CD4-positive, alpha-beta T cell (primary cell): ENCODE measurements at regions of chrX and their contacts with region 1.

Region 1: GRCh38 chrX:155216179-155216939 is at the start of gene VBP1:
- DNase-seq: peak; percentile 73 to 94 (median 81)
- ATAC-seq: peak; percentile 97
- H3K4me3 ChIP-seq: peak within 1 kb of the TSS; percentile 92
- H3K4me3 Mint-ChIP-seq: peak within 1 kb of the TSS; percentile 99
- H3K27ac ChIP-seq: peak within 1 kb of the TSS; percentile 70 to 75
- H3K27ac Mint-ChIP-seq: peak within 1 kb of the TSS; percentile 96
- H3K4me1 ChIP-seq: peaks cover 17% of the 10 kb centered on the region
- H3K4me1 Mint-ChIP-seq: peaks cover 35% of the 10 kb centered on the region
- H3K27me3 ChIP-seq: no peaks in the 10 kb centered on the region
- H3K27me3 Mint-ChIP-seq: no peaks in the 10 kb centered on the region
- CTCF ChIP-seq: peak; percentile 49
- total RNA-seq, gene VBP1: 8.5 to 8.7 TPM

Region 2: DNA sequence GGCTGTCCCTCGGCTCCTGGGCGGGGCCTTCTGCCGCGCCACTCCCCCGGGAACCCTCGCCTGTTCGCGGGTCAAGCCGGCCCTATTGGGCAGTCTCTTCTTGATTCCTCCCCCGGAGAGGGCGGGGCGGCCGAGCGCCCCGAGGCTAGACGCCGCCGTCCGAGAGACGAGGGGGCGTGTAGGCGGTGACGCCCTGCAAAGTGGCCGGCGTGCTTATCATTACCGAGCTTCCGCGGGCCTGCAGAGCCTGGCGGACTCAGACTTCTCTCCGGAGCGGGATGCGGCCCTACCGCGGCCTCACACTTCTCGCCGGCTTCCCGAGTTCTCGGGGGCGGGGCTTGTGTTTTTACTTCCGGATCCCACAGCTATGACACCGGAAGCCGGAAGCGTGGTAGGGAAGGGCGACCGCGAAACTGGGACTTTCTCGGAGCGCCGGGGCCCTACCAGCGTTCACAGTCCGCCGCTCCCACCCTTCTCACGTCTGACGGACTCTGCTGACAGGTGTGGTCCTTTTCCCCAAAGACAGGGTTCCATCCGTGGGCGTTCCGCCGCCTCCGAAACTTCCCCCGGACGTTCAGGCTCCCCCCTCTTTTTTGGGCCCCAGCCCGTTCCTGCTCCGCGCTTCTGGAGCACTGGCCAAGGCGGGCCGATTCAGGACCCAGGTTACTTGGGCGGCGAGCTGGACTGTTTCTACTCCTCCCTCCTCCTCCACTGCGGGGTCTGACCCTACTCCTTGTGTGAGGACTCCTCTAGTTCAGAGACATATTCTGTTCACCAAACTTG is 668.9 kb before region 1 on chrX and contains the start of gene IKBKG:
- CTCF ChIA-PET with region 1: no interaction called
- POLR2A ChIA-PET with region 1: no interaction called
- intact Hi-C with region 1: no loop called
- DNase-seq: peak; percentile 76 to 93 (median 84)
- ATAC-seq: peak; percentile 76
- H3K4me3 ChIP-seq: peak within 1 kb of the TSS; percentile 88
- H3K4me3 Mint-ChIP-seq: peak within 1 kb of the TSS; percentile 91
- H3K27ac ChIP-seq: peak within 1 kb of the TSS; percentile 81 to 92
- H3K27ac Mint-ChIP-seq: peak within 1 kb of the TSS; percentile 86
- H3K4me1 ChIP-seq: peaks cover 69% of the 10 kb centered on the region
- H3K4me1 Mint-ChIP-seq: peaks cover 44% of the 10 kb centered on the region
- H3K27me3 ChIP-seq: no peaks in the 10 kb centered on the region
- H3K27me3 Mint-ChIP-seq: no peaks in the 10 kb centered on the region
- CTCF ChIP-seq: no peak
- total RNA-seq, gene IKBKG: 26.2 to 27.2 TPM

Region 3: DNA sequence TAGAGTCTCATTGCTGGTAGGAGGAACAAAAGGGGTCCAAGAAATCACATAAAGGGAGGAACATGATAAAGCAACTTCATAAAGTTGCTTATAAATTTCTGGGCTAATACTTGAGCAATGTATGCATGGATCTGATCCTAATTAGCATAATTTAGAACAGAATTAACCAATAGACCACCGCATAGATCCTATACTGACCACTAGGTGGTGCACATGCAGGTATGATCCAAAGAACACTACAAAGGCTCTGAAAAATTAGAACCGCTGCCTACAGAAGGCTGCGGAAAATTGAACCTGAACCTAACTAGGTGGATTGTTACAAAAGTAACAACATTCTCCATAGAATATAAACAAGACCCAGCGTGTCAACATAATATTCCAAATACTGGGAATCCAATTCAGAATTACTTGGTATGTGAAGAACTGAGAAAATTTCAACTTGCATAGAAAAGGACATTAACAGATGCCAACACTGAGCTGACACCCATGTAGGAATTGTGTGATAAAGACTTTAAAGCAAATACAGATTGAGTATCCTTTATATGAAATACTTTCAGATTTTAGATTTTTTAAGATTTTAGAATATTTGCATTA is 121.8 kb before region 1 on chrX:
- CTCF ChIA-PET with region 1: no interaction called
- POLR2A ChIA-PET with region 1: no interaction called
- intact Hi-C with region 1: loop called (anchors 1 to 5 kb)
- DNase-seq: peak in 8 of 14 experiments; percentile 1 to 69 (median 34)
- ATAC-seq: peak; percentile 88
- H3K4me3 ChIP-seq: no peak overlapping the region
- H3K4me3 Mint-ChIP-seq: no peak overlapping the region
- H3K27ac ChIP-seq: no peak overlapping the region
- H3K27ac Mint-ChIP-seq: no peak overlapping the region
- H3K4me1 ChIP-seq: no peaks in the 10 kb centered on the region
- H3K4me1 Mint-ChIP-seq: peaks cover 6% of the 10 kb centered on the region
- H3K27me3 ChIP-seq: no peaks in the 10 kb centered on the region
- H3K27me3 Mint-ChIP-seq: no peaks in the 10 kb centered on the region
- CTCF ChIP-seq: peak; percentile 72

Region 4: GRCh38 chrX:155188786-155189185 is 27.6 kb before region 1 on chrX:
- CTCF ChIA-PET with region 1: interaction called, 3 read pairs
- POLR2A ChIA-PET with region 1: interaction called, 27 read pairs
- intact Hi-C with region 1: loop called (anchors 2 kb)
- DNase-seq: peak in 8 of 14 experiments; percentile 0 to 76 (median 28)
- ATAC-seq: peak; percentile 100
- H3K4me3 ChIP-seq: peak overlapping the region; percentile 12
- H3K4me3 Mint-ChIP-seq: peak overlapping the region; percentile 44
- H3K27ac ChIP-seq: peak overlapping the region in 1 of 2 donors; percentile 4
- H3K27ac Mint-ChIP-seq: peak overlapping the region; percentile 68
- H3K4me1 ChIP-seq: peaks cover 3% of the 10 kb centered on the region
- H3K4me1 Mint-ChIP-seq: peaks cover 49% of the 10 kb centered on the region
- H3K27me3 ChIP-seq: no peaks in the 10 kb centered on the region
- H3K27me3 Mint-ChIP-seq: no peaks in the 10 kb centered on the region
- CTCF ChIP-seq: no peak

Region 5: GRCh38 chrX:155263854-155264628 is 47.7 kb after region 1 on chrX and contains the start of gene RAB39B:
- CTCF ChIA-PET with region 1: interaction called, 6 read pairs
- POLR2A ChIA-PET with region 1: interaction called, 13 read pairs
- intact Hi-C with region 1: loop called (anchors 5 kb)
- DNase-seq: peak; percentile 43 to 87 (median 63)
- ATAC-seq: peak; percentile 88
- H3K4me3 ChIP-seq: peak within 1 kb of the TSS; percentile 72
- H3K4me3 Mint-ChIP-seq: peak within 1 kb of the TSS; percentile 74
- H3K27ac ChIP-seq: peak within 1 kb of the TSS; percentile 81 to 84
- H3K27ac Mint-ChIP-seq: peak within 1 kb of the TSS; percentile 77
- H3K4me1 ChIP-seq: peaks cover 5% of the 10 kb centered on the region
- H3K4me1 Mint-ChIP-seq: peaks cover 37% of the 10 kb centered on the region
- H3K27me3 ChIP-seq: no peaks in the 10 kb centered on the region
- H3K27me3 Mint-ChIP-seq: no peaks in the 10 kb centered on the region
- CTCF ChIP-seq: no peak
- total RNA-seq, gene RAB39B: 5.6 to 5.7 TPM